Panc1 (cell line): ENCODE measurements at regions of chr6 and their contacts with region 1.

Region 1: DNA sequence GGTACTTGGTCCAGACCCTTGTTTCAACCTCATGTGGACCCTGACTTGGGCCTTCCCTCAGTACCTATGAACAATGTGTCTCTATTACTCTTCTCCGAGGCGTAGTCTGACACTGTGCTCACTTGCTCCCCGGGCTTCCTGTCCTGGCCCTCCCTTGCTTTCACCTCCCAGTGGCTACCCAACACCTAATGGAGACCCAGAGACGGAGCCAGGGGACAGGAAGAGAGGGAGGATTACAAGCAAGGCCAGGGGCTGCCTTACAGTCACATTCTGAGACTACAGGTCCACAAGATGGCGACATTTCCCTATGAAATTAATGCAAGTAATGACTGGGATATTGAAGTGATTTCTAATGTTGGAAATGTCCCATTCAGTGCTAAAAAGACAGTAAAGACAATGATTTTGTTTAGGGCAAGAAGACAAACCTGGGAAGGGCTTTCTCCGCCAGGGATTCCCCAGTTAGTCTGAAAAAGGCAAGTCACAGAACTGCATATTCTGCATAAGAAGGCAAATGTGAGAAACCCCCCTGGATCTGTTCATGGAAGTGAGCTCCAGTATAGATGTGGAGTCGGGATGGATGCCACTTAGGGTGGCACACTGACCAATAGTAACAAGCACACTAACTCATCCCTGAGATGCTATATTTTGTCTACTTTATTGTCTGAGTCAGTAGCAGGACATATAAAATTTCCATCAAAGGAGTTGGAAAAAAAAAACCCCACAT is 44.0 kb upstream of the ZBTB24 start:
- DNase-seq: peak; percentile 57
- ATAC-seq: peak; percentile 97
- H3K4me3 ChIP-seq: no peak overlapping the region
- H3K27ac ChIP-seq: no peak overlapping the region
- H3K4me1 ChIP-seq: no peaks in the 10 kb centered on the region
- H3K27me3 ChIP-seq: peaks cover 17% of the 10 kb centered on the region
- CTCF ChIP-seq: peak; percentile 87

Region 2: GRCh38 chr6:109440331-109441068 is 86.6 kb before region 1 on chr6 and contains the starts of genes PPIL6 and SMPD2:
- CTCF ChIA-PET with region 1: interaction called, 11 read pairs
- POLR2A ChIA-PET with region 1: no interaction called
- in situ Hi-C with region 1: no loop called
- intact Hi-C with region 1: no loop called
- DNase-seq: no peak
- ATAC-seq: peak; percentile 93
- H3K4me3 ChIP-seq: peak within 1 kb of the TSS; percentile 74 to 77
- H3K27ac ChIP-seq: peak within 1 kb of the TSS; percentile 83
- H3K4me1 ChIP-seq: peaks cover 14% of the 10 kb centered on the region
- H3K27me3 ChIP-seq: no peaks in the 10 kb centered on the region
- CTCF ChIP-seq: no peak
- total RNA-seq, gene PPIL6: 2.2 TPM
- total RNA-seq, gene SMPD2: 50.0 TPM

Region 3: DNA sequence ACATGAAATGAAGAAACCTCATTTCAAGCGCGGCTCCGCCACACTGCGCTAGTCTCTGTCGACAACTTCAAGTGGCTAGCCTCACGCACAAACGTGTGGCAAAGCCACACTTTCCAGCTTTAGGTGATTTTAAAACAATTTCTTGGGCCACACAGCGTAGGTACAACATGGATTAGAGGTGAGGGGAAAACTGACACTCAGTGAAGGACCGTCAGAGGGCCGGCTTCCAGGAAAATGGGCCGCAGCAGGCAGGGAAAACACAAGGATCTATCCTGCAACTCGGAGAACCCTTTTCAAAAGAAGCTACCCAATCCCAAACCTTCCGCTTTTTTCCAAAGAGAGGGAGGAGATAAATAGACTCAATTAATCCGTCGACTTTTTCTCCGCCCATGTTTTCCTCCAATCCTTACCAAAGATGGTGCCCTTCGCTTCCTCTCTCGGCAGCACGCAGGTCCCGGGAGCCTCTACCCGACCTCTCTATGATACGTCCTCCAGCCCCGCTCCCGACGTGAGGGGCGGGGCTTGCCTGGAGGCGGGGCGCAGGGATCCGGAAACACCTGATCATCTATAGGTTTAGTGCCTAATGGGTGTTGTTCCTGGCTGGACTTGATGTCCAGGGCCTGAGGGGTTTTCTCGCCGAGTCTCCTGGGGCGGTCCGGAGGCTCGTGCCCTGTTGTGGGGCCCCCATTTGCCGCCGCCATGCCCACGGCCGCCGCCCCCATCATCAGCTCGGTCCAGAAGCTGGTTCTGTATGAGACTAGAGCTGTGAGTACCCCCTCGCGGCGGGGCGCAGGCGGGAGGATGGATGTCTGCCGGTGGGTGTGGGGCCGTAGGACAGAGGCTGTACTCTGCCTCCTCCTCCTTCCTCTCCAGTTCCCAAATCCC is 163.9 kb after region 1 on chr6 and contains the starts of genes AK9 and FIG4:
- CTCF ChIA-PET with region 1: interaction called, 3 read pairs
- POLR2A ChIA-PET with region 1: no interaction called
- in situ Hi-C with region 1: no loop called
- intact Hi-C with region 1: loop called (anchors 5 kb)
- DNase-seq: peak; percentile 84
- ATAC-seq: peak; percentile 100
- H3K4me3 ChIP-seq: peak within 1 kb of the TSS; percentile 89 to 97
- H3K27ac ChIP-seq: peak within 1 kb of the TSS; percentile 84
- H3K4me1 ChIP-seq: peaks cover 11% of the 10 kb centered on the region; the same call in 1 of the 2 replicates
- H3K27me3 ChIP-seq: peaks cover 15% of the 10 kb centered on the region
- CTCF ChIP-seq: peak; percentile 25; the same call in 1 of the 2 replicates
- total RNA-seq, gene AK9: 2.3 TPM
- total RNA-seq, gene FIG4: 19.0 TPM